ENCODE measurements at regions of chr16 and their contacts with region 1.

Region 1: DNA sequence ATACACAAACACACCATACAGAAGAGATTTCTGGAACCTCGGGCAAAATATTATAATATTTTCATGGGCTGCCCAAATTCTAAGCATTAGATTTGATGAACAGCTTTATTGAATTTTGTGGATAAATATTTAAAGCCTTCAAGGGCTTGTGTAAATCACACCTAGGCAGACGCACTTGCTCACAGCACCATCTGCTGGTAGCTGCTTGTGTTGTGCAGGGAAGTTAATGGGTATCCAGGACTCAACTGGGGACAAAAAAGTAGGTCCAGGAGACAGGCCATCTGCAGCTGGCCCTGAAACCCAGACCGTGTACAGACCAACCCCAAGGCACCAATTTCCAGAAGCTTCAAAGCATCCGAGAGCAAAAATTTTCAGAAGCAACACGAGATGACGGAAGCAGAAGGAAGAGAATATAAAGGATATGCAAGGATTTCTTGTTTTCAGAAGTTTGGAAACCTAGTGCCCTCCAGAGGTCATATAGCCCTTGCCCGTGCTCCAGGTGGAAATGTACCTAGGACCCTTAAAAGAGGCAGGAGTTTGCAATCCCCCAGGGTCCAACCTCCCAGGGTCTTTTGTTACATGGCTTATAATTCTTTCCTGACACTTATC is 140.0 kb downstream of the CHD9NB start:
- DNase-seq: peak in 3 of 4 donors; percentile 51 to 76 (median 61)
- ATAC-seq: peak; percentile 94
- H3K4me3 ChIP-seq: no peak overlapping the region
- H3K27ac ChIP-seq: no peak overlapping the region
- H3K4me1 ChIP-seq: no peaks in the 10 kb centered on the region
- H3K27me3 ChIP-seq: no peaks in the 10 kb centered on the region
- CTCF ChIP-seq: peak; percentile 61 to 62

Region 2: GRCh38 chr16:52068447-52069074 is 844.1 kb before region 1 on chr16:
- intact Hi-C with region 1: loop called in 1 of 2 experiments (anchors 10 kb)
- DNase-seq: peak in 2 of 4 donors; percentile 59 to 79
- ATAC-seq: peak; percentile 81
- H3K4me3 ChIP-seq: no peak overlapping the region
- H3K27ac ChIP-seq: no peak overlapping the region
- H3K4me1 ChIP-seq: no peaks in the 10 kb centered on the region
- H3K27me3 ChIP-seq: no peaks in the 10 kb centered on the region
- CTCF ChIP-seq: no peak

Region 3: GRCh38 chr16:52191531-52192134 is 721.0 kb before region 1 on chr16:
- intact Hi-C with region 1: loop called in 1 of 2 experiments (anchors 5 kb)
- DNase-seq: peak in 3 of 4 donors; percentile 32 to 81 (median 68)
- ATAC-seq: peak; percentile 90
- H3K4me3 ChIP-seq: no peak overlapping the region
- H3K27ac ChIP-seq: no peak overlapping the region
- H3K4me1 ChIP-seq: no peaks in the 10 kb centered on the region
- H3K27me3 ChIP-seq: no peaks in the 10 kb centered on the region
- CTCF ChIP-seq: peak; percentile 83 to 88

Region 4: GRCh38 chr16:52861614-52862022 is 51.1 kb before region 1 on chr16:
- intact Hi-C with region 1: no loop called
- DNase-seq: peak in 2 of 4 donors; percentile 67 to 76
- ATAC-seq: peak; percentile 68
- H3K4me3 ChIP-seq: no peak overlapping the region
- H3K27ac ChIP-seq: no peak overlapping the region
- H3K4me1 ChIP-seq: no peaks in the 10 kb centered on the region
- H3K27me3 ChIP-seq: no peaks in the 10 kb centered on the region
- CTCF ChIP-seq: peak in 1 of 2 donors; percentile 21

Measured in left lung (tissue), 14 donors.